H1 (cell line): ENCODE measurements at regions of chr1 and their contacts with region 1.

Region 1: DNA sequence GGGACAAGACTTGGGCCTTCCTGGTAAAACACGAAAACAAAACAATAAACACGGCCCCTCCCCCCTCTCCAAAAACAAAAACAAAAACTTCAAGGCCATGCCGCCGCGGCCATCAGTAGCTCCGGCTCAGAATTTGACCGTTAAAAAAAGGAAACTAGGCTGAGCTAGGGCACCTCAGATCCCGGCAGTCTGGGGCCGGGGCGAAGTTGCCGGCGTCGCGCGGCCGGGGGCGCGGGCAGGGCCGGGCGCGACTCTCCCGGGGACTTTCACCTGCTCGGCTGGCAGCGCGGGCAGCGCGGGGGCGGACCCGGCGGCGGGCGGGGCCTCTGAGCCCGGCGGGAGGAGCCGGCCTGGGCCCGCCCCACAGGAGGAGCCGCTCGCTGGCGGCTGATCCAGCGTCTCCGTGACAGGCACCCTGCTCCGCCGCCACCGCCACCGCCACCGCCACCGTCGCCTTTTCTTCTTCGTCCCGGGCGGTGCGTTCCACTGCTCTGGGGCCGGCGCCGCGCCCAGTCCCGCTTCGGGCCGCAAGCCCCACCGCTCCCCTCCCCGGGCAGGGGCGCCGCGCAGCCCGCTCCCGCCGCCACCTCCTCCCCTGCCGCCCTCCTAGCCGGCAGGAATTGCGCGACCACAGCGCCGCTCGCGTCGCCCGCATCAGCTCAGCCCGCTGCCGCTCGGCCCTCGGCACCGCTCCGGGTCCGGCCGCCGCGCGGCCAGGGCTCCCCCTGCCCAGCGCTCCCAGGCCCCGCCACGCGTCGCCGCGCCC is at the start of gene NOS1AP:
- DNase-seq: peak in 1 of 2 experiments; percentile 89
- H3K4me3 ChIP-seq: peak within 1 kb of the TSS; percentile 72 to 79 (median 76)
- H3K27ac ChIP-seq: no peak within 1 kb of the TSS
- H3K4me1 ChIP-seq: peaks cover 6 to 32% (median 16%) of the 10 kb centered on the region in 4 experiments; a peak in 6 of 7 replicates
- H3K27me3 ChIP-seq: no peaks in the 10 kb centered on the region
- CTCF ChIP-seq: no peak
- EP300 ChIP-seq: no peak
- POLR2A ChIP-seq: no peak; a peak in 1 of 3 replicates
- RAD21 ChIP-seq: no peak; a peak in 1 of 4 replicates
- total RNA-seq, gene NOS1AP: 11.4 and 12.1 TPM in 2 replicates

Region 2: DNA sequence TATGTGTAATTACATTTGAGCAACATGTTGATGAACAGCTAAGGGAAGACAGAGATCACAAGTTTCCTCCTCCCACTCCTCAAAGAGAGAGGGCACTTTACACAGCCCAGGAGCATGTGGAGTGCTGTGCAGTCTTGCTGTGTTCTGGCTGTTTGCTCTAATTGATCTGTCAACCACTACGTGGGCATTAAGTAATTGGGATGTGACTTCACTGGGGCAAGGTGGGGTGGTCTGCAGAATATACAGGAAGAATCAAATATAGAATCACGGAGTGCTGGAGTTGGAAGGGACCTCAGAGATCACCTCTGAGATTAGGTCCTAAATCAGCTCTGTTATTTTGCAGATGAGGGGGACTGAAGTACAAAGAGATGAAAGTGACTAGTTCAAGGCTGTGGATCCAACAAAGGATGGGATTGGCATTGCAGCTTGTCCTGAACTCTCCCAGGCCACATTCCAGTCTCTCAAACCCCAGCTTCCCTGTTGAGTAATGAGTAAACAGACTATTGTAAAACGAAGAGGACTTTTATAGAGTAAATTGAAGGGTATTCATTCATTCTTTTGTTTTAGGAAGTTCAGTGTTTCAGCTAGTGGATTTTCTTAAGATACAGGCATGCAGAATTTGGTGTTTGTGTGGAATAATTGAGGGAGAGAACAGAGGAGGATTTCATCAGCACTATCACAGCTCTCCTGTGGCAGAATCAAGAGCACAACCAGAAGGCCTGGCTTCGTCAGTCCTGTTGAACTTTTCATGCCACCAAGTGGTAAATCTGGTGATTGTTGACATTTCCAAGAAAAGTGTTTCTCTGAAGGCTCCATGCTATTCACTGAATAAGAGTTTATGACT is 22.4 kb after region 1 on chr1:
- CTCF ChIA-PET with region 1: interaction called, 9 read pairs
- POLR2A ChIA-PET with region 1: interaction called, 16 read pairs
- DNase-seq: peak; percentile 56 to 70
- H3K4me3 ChIP-seq: peak overlapping the region in 3 of 4 experiments; percentile 17 to 41 (median 26); a peak in 4 of 8 replicates
- H3K27ac ChIP-seq: no peak overlapping the region
- H3K4me1 ChIP-seq: peaks cover 4 to 17% (median 11%) of the 10 kb centered on the region in 4 experiments; a peak in 6 of 7 replicates
- H3K27me3 ChIP-seq: peaks cover 0 to 5% (median 2%) of the 10 kb centered on the region in 4 experiments; a peak in 4 of 7 replicates
- CTCF ChIP-seq: no peak; a peak in 1 of 4 replicates
- EP300 ChIP-seq: peak in 1 of 2 experiments; percentile 81; a peak in 2 of 3 replicates
- POLR2A ChIP-seq: no peak
- RAD21 ChIP-seq: peak; percentile 19; a peak in 2 of 4 replicates